Aorta (tissue), 5 donors: ENCODE measurements at regions of chr4 and their contacts with region 1.

Region 1: DNA sequence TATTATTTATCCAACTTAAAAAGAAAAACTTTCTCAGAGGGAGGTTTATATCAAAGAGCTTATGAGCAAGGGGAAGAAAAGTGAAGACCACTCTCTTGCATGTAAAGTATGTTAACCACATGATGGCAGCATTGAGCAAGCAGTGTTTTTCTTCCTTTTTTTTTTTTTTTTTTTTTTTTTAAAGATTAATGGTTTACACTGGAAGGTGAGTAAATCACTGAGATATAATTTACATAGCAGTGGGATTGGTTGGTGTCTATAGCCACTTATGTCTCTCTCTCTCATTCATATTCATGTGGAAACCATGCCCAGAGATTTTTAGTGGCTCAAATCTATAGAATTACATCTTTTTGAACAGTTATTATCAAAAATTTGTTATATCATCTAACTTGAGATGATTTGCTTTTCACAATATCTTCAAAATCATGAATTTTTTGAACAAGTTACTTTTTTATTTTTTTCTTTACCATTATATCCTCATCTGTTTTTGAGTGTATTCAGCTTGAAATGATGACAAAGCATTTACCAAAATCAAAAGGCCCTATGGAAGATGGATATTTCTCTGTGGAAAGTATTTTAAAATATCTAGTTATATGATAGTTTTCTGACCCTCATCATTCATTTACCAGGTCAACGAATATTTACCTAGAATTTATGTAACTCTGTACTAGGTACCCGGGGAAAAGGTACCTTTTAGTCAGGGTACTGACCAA is 31.6 kb downstream of the MTHFD2L start:
- DNase-seq: no peak
- ATAC-seq: no peak
- H3K4me3 ChIP-seq: no peak overlapping the region
- H3K27ac ChIP-seq: no peak overlapping the region
- H3K4me1 ChIP-seq: no peaks in the 10 kb centered on the region
- H3K27me3 ChIP-seq: no peaks in the 10 kb centered on the region

Region 2: GRCh38 chr4:74228691-74229640 is 39.5 kb after region 1 on chr4:
- intact Hi-C with region 1: no loop called
- DNase-seq: peak; percentile 68 to 81
- ATAC-seq: no peak
- H3K4me3 ChIP-seq: no peak overlapping the region
- H3K27ac ChIP-seq: no peak overlapping the region
- H3K4me1 ChIP-seq: no peaks in the 10 kb centered on the region
- H3K27me3 ChIP-seq: no peaks in the 10 kb centered on the region

Region 3: DNA sequence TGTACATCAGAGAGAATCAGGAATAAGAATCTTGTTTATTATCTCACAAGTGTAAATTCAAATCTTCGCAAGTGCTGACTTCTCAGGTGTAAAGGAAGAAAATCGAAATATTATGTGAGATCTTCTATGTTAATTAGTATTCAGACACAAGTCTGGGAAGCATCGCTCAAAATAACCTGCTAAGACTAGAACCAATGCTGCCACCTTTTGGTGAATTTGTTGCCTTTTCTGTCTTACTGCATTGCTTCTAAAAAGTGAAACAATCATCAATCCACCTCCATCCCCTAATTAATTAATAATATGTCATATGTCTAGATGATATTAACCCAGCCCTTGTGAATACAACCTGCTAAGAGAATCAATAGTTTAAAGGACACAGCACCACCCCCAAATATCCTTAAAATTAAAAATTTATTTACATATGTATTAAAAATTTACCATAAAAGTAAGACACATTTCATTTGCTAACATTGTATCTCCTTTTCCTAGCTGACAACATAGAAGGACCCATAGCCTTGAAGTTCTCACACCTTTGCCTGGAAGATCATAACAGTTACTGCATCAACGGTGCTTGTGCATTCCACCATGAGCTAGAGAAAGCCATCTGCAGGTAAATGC is 122.3 kb after region 1 on chr4:
- intact Hi-C with region 1: loop called (anchors 5 kb)
- DNase-seq: no peak
- ATAC-seq: no peak
- H3K4me3 ChIP-seq: no peak overlapping the region
- H3K27ac ChIP-seq: no peak overlapping the region
- H3K4me1 ChIP-seq: no peaks in the 10 kb centered on the region
- H3K27me3 ChIP-seq: no peaks in the 10 kb centered on the region

Region 4: GRCh38 chr4:74516321-74516720 is 326.8 kb after region 1 on chr4:
- intact Hi-C with region 1: no loop called
- DNase-seq: no peak
- ATAC-seq: no peak
- H3K4me3 ChIP-seq: no peak overlapping the region
- H3K27ac ChIP-seq: no peak overlapping the region
- H3K4me1 ChIP-seq: no peaks in the 10 kb centered on the region
- H3K27me3 ChIP-seq: no peaks in the 10 kb centered on the region